Activated CD8-positive, alpha-beta T cell treated with anti-CD3 and anti-CD28 coated beads, Interleukin-2, amount 10 ng/mL, durations not matched to agents 7 days and 5 days (primary cell): ENCODE measurements at regions of chr1 and their contacts with region 1.

Region 1: GRCh38 chr1:147084273-147085096 is 87.8 kb downstream of the PRKAB2 start:
- DNase-seq: peak; percentile 86
- ATAC-seq: peak; percentile 76
- H3K4me3 Mint-ChIP-seq: peak overlapping the region; percentile 90
- H3K27ac Mint-ChIP-seq: peak overlapping the region; percentile 100
- H3K4me1 Mint-ChIP-seq: peaks cover 44% of the 10 kb centered on the region
- H3K27me3 Mint-ChIP-seq: peaks cover 52% of the 10 kb centered on the region

Region 2: GRCh38 chr1:147046189-147046862 is 38.2 kb before region 1 on chr1:
- CTCF ChIA-PET with region 1: interaction called, 7 read pairs
- POLR2A ChIA-PET with region 1: interaction called, 85 read pairs
- DNase-seq: no peak
- ATAC-seq: peak; percentile 43
- H3K4me3 Mint-ChIP-seq: peak overlapping the region; percentile 53
- H3K27ac Mint-ChIP-seq: peak overlapping the region; percentile 92
- H3K4me1 Mint-ChIP-seq: peaks cover 52% of the 10 kb centered on the region
- H3K27me3 Mint-ChIP-seq: no peaks in the 10 kb centered on the region

Region 3: GRCh38 chr1:147062956-147063355 is 21.5 kb before region 1 on chr1:
- CTCF ChIA-PET with region 1: no interaction called
- POLR2A ChIA-PET with region 1: interaction called, 10 read pairs
- DNase-seq: no peak
- ATAC-seq: no peak
- H3K4me3 Mint-ChIP-seq: no peak overlapping the region
- H3K27ac Mint-ChIP-seq: no peak overlapping the region
- H3K4me1 Mint-ChIP-seq: no peaks in the 10 kb centered on the region
- H3K27me3 Mint-ChIP-seq: peaks cover 6% of the 10 kb centered on the region

Region 4: DNA sequence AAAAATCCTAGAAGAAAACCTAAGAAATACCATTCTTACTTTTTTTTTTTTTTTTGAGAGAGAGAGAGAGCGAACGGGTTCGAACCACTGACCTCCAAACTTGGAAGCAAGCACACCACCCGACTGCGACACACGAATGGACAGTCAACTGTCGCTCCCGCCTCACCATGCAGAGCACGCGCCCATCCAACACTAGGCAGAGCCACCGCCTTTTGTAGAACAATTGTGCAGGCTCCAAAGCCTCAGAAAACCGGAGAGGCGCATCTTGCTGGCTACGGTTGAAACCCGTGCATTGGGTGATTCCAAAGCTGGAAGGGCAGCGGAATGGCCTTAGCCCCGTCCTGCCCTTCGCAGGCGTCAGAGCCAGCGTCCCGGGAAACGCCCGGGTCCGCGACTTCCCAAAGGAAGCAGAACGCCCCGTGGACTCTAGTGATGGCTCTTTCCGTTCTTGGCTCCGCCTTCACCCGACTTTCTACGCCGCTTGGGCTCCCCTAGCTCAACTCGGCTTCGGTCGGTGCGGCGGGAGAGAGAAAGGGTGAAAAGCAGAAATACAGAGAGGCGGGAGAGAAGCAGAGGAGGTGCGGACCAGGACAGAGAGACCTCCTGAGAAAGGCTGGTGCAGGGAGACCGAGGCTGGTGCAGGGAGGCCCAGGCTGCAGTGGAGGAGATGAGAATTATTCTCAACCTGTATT is 12.0 kb before region 1 on chr1:
- CTCF ChIA-PET with region 1: interaction called, 3 read pairs
- POLR2A ChIA-PET with region 1: interaction called, 23 read pairs
- DNase-seq: peak; percentile 52
- ATAC-seq: peak; percentile 79
- H3K4me3 Mint-ChIP-seq: peak overlapping the region; percentile 76
- H3K27ac Mint-ChIP-seq: peak overlapping the region; percentile 35
- H3K4me1 Mint-ChIP-seq: peaks cover 32% of the 10 kb centered on the region
- H3K27me3 Mint-ChIP-seq: peaks cover 38% of the 10 kb centered on the region

Region 5: GRCh38 chr1:147109041-147109440 is 24.6 kb after region 1 on chr1:
- CTCF ChIA-PET with region 1: no interaction called
- POLR2A ChIA-PET with region 1: interaction called, 16 read pairs
- DNase-seq: no peak
- ATAC-seq: no peak
- H3K4me3 Mint-ChIP-seq: no peak overlapping the region
- H3K27ac Mint-ChIP-seq: no peak overlapping the region
- H3K4me1 Mint-ChIP-seq: peaks cover 16% of the 10 kb centered on the region
- H3K27me3 Mint-ChIP-seq: peaks cover 24% of the 10 kb centered on the region

Region 6: DNA sequence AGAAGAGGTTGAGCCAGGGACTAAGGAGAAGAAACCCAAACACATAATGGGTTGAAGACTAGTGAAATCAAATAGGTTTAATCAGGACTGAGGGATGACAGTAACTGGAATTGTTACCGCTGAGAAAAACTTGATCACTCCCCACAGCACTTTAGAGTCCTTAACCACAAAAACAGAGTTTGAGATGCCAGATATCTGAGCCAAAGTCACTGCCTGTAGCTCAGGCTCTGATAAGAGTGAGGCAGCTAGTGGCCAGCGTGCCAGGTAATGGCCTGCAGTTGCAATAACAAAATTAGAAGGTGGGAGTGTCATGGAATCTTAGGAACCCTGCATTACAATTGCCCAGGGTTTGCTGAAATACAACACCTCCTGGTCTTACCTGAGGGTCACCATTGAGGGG is 39.8 kb after region 1 on chr1:
- CTCF ChIA-PET with region 1: no interaction called
- POLR2A ChIA-PET with region 1: no interaction called
- DNase-seq: no peak
- ATAC-seq: no peak
- H3K4me3 Mint-ChIP-seq: no peak overlapping the region
- H3K27ac Mint-ChIP-seq: no peak overlapping the region
- H3K4me1 Mint-ChIP-seq: no peaks in the 10 kb centered on the region
- H3K27me3 Mint-ChIP-seq: peaks cover 19% of the 10 kb centered on the region

Region 7: DNA sequence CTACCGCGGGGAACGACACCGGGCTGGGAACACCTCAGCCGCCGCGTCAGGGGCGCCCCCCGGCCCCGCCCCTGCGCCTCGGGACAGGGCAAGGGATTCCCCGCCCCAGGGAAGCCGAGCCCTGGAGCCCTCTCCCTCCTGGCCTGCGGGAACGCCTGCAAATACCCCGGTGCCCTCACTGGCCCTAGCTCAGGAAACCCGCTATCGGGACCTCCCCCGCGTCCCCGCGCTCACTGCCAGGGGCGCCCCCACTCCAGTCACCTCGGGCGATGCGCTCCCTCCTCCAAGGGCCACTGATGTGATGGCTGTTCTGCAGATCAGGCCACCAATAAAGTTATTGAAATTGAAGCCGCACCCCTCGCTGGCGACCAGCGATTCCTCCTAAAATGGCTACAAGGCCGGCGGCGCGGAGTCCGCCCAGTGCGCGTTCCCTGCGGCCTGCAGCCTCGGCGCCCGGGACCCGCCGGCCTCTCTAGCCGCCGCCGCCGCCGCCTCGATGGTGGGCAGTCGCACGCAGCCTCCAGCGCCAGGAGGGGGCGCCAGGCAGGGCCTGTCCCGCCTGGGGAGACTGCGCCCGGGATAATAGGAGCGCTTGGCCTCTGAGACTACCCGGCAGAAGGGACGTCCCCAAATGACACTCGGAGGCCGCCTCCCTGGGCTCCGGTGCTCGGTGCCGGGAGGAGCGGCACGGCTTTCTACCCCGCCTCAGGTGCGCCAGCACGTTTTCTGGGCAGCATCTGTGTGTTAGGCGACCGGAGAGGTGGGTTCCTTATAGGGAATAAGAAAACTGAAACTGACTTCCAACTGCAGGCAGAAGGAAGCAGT is 87.9 kb after region 1 on chr1 and contains the start of gene PRKAB2:
- CTCF ChIA-PET with region 1: no interaction called
- POLR2A ChIA-PET with region 1: interaction called, 20 read pairs
- DNase-seq: peak; percentile 91
- ATAC-seq: peak; percentile 87
- H3K4me3 Mint-ChIP-seq: peak within 1 kb of the TSS; percentile 98
- H3K27ac Mint-ChIP-seq: peak within 1 kb of the TSS; percentile 97
- H3K4me1 Mint-ChIP-seq: peaks cover 32% of the 10 kb centered on the region
- H3K27me3 Mint-ChIP-seq: peaks cover 1% of the 10 kb centered on the region
- total RNA-seq, gene PRKAB2: 9.6 to 10.4 TPM

Region 8: DNA sequence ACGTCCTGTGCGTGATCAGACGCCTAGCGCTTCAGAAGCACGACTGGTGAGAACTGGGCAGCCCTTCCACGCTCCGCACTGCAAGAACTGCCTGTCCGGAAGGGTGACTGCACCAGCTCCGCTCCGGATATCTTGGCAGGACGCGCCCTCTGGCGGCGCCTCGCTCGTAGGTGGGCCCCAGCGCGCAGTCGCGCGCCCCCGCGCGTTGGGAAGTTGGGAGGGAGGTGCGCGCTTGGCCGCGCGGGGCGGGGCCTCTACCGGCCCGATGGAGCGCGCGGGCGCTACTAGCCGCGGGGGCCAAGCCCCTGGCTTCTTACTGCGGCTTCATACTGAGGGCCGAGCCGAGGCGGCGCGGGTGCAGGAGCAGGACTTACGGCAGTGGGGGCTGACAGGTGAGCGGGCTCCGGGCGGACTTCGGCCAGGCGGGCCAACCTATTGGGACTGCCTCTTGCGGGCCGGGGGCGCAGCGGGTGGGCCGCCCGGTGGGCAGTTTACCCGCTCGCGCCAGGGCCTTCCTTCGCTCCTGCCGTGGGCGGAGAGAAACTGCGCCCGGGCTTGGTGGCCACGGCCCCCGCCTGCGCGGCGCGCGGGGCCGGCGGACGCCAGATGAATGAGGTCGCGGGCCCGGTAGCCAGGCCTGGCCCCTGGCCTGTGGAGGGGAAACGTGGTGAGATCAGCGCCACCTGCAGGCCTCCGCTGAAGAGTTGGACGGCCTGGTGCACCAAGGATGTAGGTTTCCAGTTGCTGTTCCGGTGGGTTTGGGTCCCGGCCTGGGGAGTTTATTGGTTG is 158.1 kb after region 1 on chr1 and contains the start of gene CHD1L:
- CTCF ChIA-PET with region 1: interaction called, 3 read pairs
- POLR2A ChIA-PET with region 1: interaction called, 34 read pairs
- DNase-seq: peak; percentile 95
- ATAC-seq: peak; percentile 91
- H3K4me3 Mint-ChIP-seq: peak within 1 kb of the TSS; percentile 94
- H3K27ac Mint-ChIP-seq: peak within 1 kb of the TSS; percentile 80
- H3K4me1 Mint-ChIP-seq: peaks cover 45% of the 10 kb centered on the region
- H3K27me3 Mint-ChIP-seq: peaks cover 6% of the 10 kb centered on the region
- total RNA-seq, gene CHD1L: 62.3 to 63.2 TPM